ENCODE measurements at regions of chr9 and their contacts with region 1.

Region 1: DNA sequence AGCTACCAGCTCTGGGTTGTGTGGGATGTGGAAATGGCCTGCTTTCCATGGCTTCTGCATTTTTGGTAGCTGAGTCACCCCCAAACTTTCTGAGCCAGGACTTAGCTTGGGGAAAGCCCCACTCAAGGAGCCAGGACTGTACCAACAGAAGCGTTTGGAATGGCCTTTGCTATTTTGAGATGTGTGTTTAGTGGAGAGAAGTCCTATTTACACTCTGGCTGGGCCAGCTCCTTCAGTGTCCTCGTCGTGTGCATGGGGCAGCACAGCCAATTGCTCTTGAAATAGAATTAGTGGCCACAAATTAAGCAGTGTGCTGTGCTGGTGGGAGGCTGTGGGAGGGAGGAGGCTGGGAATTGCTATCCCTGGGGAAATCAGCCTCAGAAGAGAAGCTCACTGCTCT is 51.6 kb downstream of the ENTREP1 start:
- DNase-seq: peak; percentile 19 to 81
- H3K4me3 ChIP-seq: no peak overlapping the region
- H3K27ac ChIP-seq: peak overlapping the region in 1 of 2 donors; percentile 29
- H3K4me1 ChIP-seq: peaks cover 4 to 16% of the 10 kb centered on the region in 2 donors
- H3K27me3 ChIP-seq: no peaks in the 10 kb centered on the region
- CTCF ChIP-seq: no peak

Region 2: GRCh38 chr9:68999393-69000105 is 377.1 kb before region 1 on chr9:
- intact Hi-C with region 1: no loop called
- DNase-seq: peak in 1 of 2 donors; percentile 80
- H3K4me3 ChIP-seq: no peak overlapping the region
- H3K27ac ChIP-seq: no peak overlapping the region
- H3K4me1 ChIP-seq: no peaks in the 10 kb centered on the region
- H3K27me3 ChIP-seq: no peaks in the 10 kb centered on the region
- CTCF ChIP-seq: peak; percentile 46 to 81 (median 68)

Region 3: GRCh38 chr9:69324549-69325401 is 51.9 kb before region 1 on chr9 and contains the start of gene ENTREP1:
- intact Hi-C with region 1: loop called (anchors 5 kb)
- DNase-seq: peak in 1 of 2 donors; percentile 71
- H3K4me3 ChIP-seq: peak within 1 kb of the TSS; percentile 69 to 71
- H3K27ac ChIP-seq: peak within 1 kb of the TSS; percentile 35 to 65
- H3K4me1 ChIP-seq: peaks cover 0 to 8% of the 10 kb centered on the region in 2 donors
- H3K27me3 ChIP-seq: no peaks in the 10 kb centered on the region
- CTCF ChIP-seq: peak in 2 of 3 experiments; percentile 5 to 21
- total RNA-seq, gene ENTREP1: 4.2 TPM

Region 4: DNA sequence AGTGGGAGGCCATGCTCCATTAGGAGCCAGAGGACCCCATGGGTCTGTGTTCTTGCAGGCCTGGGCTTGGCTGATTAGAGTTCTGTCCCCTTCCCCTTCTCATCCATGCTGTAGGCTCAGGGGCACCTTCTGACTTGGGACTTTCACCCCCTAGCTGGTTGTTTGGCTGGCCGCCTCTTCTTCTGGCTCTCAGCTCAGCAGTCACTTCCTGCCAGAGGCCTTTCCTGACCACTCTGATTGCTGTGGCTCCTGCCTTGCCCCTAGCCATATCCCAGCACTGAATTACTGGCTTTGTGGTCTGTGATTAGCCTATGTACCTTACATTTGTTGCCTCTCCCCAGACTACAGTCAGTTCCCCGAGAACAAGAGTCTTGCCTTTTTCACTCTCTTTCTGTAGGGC is 37.0 kb before region 1 on chr9:
- intact Hi-C with region 1: no loop called
- DNase-seq: no peak
- H3K4me3 ChIP-seq: no peak overlapping the region
- H3K27ac ChIP-seq: no peak overlapping the region
- H3K4me1 ChIP-seq: no peaks in the 10 kb centered on the region
- H3K27me3 ChIP-seq: no peaks in the 10 kb centered on the region
- CTCF ChIP-seq: no peak

Region 5: DNA sequence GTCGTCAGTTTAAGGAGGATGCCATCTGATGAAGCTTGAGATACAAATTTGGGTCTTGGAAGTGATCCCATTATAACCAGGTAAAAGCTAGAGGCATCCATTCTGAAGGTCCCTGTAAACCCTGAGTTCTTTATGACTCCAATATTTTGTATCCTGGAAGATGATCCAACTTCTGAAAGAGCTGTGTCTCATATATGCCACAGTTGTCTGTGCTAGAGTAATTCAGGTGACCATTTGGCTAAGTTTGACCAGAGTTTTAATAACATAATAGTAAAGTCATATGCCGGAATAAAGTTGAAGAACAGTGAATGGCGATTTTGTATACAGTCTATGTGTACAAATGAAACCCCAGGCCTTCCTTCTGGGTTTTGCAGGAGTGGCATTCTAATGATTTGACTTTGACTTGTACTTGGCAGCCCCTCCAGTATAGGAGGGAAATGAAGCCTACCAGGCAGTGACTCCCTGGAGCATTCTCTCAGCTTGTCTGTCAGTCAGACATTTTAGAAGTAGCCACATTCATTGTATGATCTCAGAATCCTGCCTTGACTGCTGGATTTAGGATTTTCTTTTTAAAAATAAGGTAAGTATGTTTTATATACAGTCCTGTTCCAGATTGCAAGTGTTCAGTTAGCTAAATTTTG is 12.0 kb before region 1 on chr9:
- intact Hi-C with region 1: no loop called
- DNase-seq: no peak
- H3K4me3 ChIP-seq: no peak overlapping the region
- H3K27ac ChIP-seq: no peak overlapping the region
- H3K4me1 ChIP-seq: no peaks in the 10 kb centered on the region
- H3K27me3 ChIP-seq: no peaks in the 10 kb centered on the region
- CTCF ChIP-seq: no peak

Region 6: GRCh38 chr9:69532396-69532795 is 155.7 kb after region 1 on chr9:
- intact Hi-C with region 1: no loop called
- DNase-seq: no peak
- H3K4me3 ChIP-seq: no peak overlapping the region
- H3K27ac ChIP-seq: no peak overlapping the region
- H3K4me1 ChIP-seq: no peaks in the 10 kb centered on the region
- H3K27me3 ChIP-seq: no peaks in the 10 kb centered on the region
- CTCF ChIP-seq: no peak